Breast epithelium (tissue), 4 donors: ENCODE measurements at regions of chr1 and their contacts with region 1.

Region 1: GRCh38 chr1:25099343-25099951 is 132.9 kb downstream of the SYF2 start:
- DNase-seq: no peak
- H3K4me3 ChIP-seq: no peak overlapping the region
- H3K27ac ChIP-seq: no peak overlapping the region
- H3K4me1 ChIP-seq: no peaks in the 10 kb centered on the region
- H3K27me3 ChIP-seq: no peaks in the 10 kb centered on the region
- CTCF ChIP-seq: no peak
- POLR2A ChIP-seq: no peak

Region 2: GRCh38 chr1:24910751-24911650 is 188.4 kb before region 1 on chr1:
- intact Hi-C with region 1: no loop called
- DNase-seq: peak in 1 of 2 donors; percentile 49
- H3K4me3 ChIP-seq: no peak overlapping the region
- H3K27ac ChIP-seq: peak overlapping the region; percentile 25 to 57
- H3K4me1 ChIP-seq: no peaks in the 10 kb centered on the region
- H3K27me3 ChIP-seq: no peaks in the 10 kb centered on the region
- CTCF ChIP-seq: no peak
- POLR2A ChIP-seq: no peak

Region 3: GRCh38 chr1:25068829-25069228 is 30.6 kb before region 1 on chr1:
- intact Hi-C with region 1: no loop called
- DNase-seq: no peak
- H3K4me3 ChIP-seq: no peak overlapping the region
- H3K27ac ChIP-seq: no peak overlapping the region
- H3K4me1 ChIP-seq: peaks cover 5 to 15% of the 10 kb centered on the region in 2 donors
- H3K27me3 ChIP-seq: no peaks in the 10 kb centered on the region
- CTCF ChIP-seq: no peak
- POLR2A ChIP-seq: no peak

Region 4: DNA sequence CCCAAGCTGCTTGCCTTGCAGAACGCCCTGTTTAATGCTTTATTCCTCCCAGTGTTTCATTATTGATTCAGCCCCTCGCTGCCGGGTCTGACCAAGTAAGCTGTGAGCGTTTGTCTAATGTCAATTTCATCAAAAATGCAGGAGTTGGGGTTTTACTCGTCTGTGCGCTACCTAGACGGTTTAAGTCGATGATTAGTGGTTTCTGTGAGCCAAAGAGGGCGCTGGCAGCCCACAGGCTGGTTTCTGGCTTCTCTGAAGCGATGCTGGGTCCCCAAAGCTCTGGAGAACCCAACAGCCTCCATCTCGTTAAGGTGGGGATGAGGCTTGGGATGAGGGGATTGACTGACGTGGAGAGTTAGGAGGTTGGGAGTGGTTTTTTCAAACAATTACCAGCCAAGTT is 29.9 kb after region 1 on chr1:
- intact Hi-C with region 1: loop called (anchors 1 kb)
- DNase-seq: no peak
- H3K4me3 ChIP-seq: no peak overlapping the region
- H3K27ac ChIP-seq: no peak overlapping the region
- H3K4me1 ChIP-seq: no peaks in the 10 kb centered on the region
- H3K27me3 ChIP-seq: no peaks in the 10 kb centered on the region
- CTCF ChIP-seq: no peak
- POLR2A ChIP-seq: no peak

Region 5: GRCh38 chr1:25819576-25820246 is 720.3 kb after region 1 on chr1 and contains the start of gene MTFR1L:
- intact Hi-C with region 1: no loop called
- DNase-seq: peak; percentile 83 to 91
- H3K4me3 ChIP-seq: peak within 1 kb of the TSS; percentile 68 to 90 (median 88)
- H3K27ac ChIP-seq: peak within 1 kb of the TSS; percentile 93 to 95
- H3K4me1 ChIP-seq: peaks cover 7 to 22% of the 10 kb centered on the region in 2 donors
- H3K27me3 ChIP-seq: no peaks in the 10 kb centered on the region
- CTCF ChIP-seq: no peak
- POLR2A ChIP-seq: peak; percentile 96
- total RNA-seq, gene MTFR1L: 71.6 to 79.2 (median 75.4) TPM